ENCODE measurements at regions of chr7 and their contacts with region 1.

Region 1: DNA sequence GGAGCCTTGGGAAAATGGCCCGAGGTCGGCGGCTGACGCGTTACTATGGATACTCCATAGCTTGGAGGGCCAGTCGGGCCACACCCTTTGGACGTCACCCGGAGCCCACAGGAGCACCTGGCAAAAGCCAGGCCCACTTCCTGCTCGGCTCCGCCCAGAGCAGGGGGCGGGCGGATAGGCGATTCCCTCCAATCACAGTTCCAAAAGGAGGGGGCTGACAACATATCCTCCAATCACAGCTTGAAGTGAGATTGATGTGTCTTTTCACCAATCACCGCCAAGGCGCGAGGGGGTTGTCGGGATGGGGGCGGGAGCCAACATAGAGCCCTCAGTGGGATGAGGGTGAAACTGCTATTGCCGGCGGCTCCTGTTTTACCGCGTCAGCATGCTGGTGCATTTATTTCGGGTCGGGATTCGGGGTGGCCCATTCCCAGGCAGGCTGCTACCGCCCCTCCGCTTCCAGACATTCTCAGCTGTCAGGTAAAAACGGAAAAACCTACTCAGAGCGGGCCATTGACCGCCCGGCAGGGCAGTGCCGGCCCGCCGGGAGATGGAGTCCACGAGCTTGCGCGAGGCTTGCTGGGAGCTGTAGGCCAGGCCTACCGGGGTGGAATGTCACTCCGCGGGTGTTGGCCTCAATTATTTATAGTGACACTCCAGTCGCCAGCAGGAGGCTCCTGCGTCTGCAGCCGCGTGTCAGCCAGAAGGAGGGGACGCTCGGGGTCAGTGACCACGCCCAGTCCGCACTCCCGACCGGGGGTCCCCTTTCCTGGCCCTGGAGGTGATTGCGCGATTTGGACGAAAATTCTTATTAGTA is at the start of gene ABCB8:
- DNase-seq: peak; percentile 99
- H3K4me3 Mint-ChIP-seq: peak within 1 kb of the TSS; percentile 96
- H3K27ac Mint-ChIP-seq: peak within 1 kb of the TSS; percentile 93
- H3K4me1 Mint-ChIP-seq: peaks cover 13% of the 10 kb centered on the region
- H3K27me3 Mint-ChIP-seq: peaks cover 2% of the 10 kb centered on the region
- total RNA-seq, gene ABCB8: 59.5 and 59.6 TPM in 2 replicates

Region 2: GRCh38 chr7:151038951-151039849 is 10.9 kb after region 1 on chr7:
- intact Hi-C with region 1: loop called (anchors 1 kb)
- DNase-seq: no peak
- H3K4me3 Mint-ChIP-seq: no peak overlapping the region
- H3K27ac Mint-ChIP-seq: peak overlapping the region; percentile 91
- H3K4me1 Mint-ChIP-seq: peaks cover 15% of the 10 kb centered on the region
- H3K27me3 Mint-ChIP-seq: no peaks in the 10 kb centered on the region

Region 3: DNA sequence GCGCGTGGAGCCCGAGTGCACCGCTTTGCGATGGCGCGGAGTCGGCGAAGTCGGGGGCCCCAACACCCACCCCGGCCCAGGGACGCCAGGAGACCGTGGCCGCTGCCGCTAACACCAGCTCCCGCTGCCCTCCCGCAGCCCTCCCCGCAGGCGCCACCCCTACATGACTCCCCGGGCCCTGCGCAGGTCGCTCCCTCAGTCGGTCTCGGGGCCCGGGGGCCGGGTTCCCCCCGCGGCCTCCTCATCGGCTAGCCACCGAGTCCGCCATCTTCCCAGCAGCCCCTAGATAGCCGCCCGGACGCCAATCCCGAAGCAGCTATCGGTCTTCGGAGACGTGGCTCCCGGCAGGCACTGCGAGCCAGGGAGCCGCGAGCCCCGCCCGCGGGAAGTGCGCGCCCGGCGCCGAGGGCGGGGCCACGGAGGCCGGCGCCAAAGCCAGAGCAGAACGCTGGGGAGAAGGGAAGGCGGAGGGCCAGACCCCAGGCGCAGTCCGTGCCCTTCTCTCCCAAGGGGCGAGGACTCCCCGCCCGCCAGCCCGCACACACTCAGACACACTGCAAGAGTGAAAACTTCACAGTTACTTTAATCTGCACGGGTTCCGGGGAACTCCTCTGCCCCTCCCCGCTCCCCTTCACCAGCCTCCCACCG is 52.3 kb after region 1 on chr7 and contains the start of gene FASTK:
- intact Hi-C with region 1: loop called (anchors 1 kb)
- DNase-seq: peak; percentile 86
- H3K4me3 Mint-ChIP-seq: peak within 1 kb of the TSS; percentile 94
- H3K27ac Mint-ChIP-seq: peak within 1 kb of the TSS; percentile 75
- H3K4me1 Mint-ChIP-seq: peaks cover 22% of the 10 kb centered on the region
- H3K27me3 Mint-ChIP-seq: peaks cover 6% of the 10 kb centered on the region
- total RNA-seq, gene FASTK: 83.2 and 85.2 TPM in 2 replicates

Region 4: GRCh38 chr7:151110941-151111645 is 82.8 kb after region 1 on chr7:
- intact Hi-C with region 1: loop called (anchors 1 kb)
- DNase-seq: peak; percentile 55
- H3K4me3 Mint-ChIP-seq: no peak overlapping the region
- H3K27ac Mint-ChIP-seq: no peak overlapping the region
- H3K4me1 Mint-ChIP-seq: no peaks in the 10 kb centered on the region
- H3K27me3 Mint-ChIP-seq: peaks cover 5% of the 10 kb centered on the region

Region 5: DNA sequence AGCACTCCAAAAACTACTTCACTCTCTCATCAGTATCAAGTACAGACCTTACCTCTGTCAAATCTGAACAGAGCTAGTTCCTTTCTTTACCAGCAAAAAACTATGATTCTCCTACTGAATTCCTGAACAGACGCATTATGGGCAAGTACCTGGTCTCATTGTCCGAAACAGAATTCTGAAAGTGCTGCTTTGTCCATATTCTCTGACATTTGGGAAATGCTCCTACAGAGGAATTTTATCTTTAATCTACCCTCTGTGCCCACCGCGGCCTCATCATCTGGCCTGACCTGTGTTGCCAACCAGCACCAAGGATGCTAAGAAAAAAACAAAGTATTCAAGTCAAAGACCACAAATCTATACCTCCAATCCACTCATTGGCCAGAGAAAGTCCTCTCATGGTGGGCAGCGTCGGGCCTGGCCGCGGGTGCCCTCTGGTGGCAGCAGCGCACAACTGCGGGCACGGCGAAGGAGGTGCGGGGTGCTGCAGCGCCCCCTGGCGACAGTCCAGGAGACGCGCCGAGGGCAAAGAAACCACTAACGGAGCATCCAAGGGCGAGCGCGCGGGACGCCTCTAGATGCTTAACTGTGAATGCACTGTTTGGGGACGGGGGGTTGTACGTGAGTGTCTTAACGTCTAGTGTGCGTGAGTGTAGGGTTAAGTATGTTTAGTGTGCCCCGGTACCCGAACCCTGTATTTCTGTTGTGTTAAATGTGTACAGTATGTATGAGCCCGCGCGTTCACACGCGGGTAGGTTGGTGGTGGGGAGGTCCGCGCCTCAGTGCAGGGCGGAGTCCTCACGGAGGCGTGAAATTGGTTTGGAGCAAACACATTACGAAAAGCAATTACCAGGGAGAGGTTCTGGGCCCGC is 144.2 kb after region 1 on chr7:
- intact Hi-C with region 1: no loop called
- DNase-seq: peak; percentile 72
- H3K4me3 Mint-ChIP-seq: no peak overlapping the region
- H3K27ac Mint-ChIP-seq: no peak overlapping the region
- H3K4me1 Mint-ChIP-seq: peaks cover 9% of the 10 kb centered on the region
- H3K27me3 Mint-ChIP-seq: peaks cover 47% of the 10 kb centered on the region